ENCODE measurements at regions of chr3 and their contacts with region 1.

Region 1: GRCh38 chr3:17412950-17413530 is 329.4 kb downstream of the TBC1D5 start:
- ATAC-seq: peak in 4 of 8 experiments; percentile 23 to 81 (median 60)
- H3K4me3 ChIP-seq: no peak overlapping the region
- H3K27ac ChIP-seq: no peak overlapping the region
- H3K4me1 ChIP-seq: no peaks in the 10 kb centered on the region

Region 2: GRCh38 chr3:17258823-17259436 is 154.1 kb before region 1 on chr3:
- in situ Hi-C with region 1: loop called in 2 of 9 experiments (anchors 5 to 10 kb)
- ATAC-seq: no peak
- H3K4me3 ChIP-seq: no peak overlapping the region
- H3K27ac ChIP-seq: no peak overlapping the region
- H3K4me1 ChIP-seq: peaks cover 0 to 16% of the 10 kb centered on the region in 2 donors

Region 3: DNA sequence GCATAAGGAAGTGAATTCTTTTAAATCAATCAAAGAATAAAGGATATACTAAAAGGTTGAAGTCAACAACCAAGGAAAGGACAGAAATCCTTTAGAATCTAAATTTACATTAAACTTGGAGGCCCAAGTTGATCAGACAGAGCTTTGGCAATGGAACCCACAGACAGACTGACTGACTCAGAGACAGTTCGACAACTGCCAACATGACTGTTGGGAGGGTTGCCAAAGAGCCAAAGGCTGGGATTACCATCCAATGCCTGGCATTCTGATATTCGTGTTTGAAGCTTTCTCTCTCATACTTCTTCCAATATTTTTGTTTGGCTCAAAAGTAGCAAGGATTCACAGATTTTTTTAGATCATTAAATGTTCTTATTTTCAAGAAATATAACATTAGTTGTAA is 122.1 kb before region 1 on chr3:
- in situ Hi-C with region 1: loop called in 1 of 9 experiments (anchors 25 kb)
- ATAC-seq: no peak
- H3K4me3 ChIP-seq: no peak overlapping the region
- H3K27ac ChIP-seq: no peak overlapping the region
- H3K4me1 ChIP-seq: no peaks in the 10 kb centered on the region

Region 4: DNA sequence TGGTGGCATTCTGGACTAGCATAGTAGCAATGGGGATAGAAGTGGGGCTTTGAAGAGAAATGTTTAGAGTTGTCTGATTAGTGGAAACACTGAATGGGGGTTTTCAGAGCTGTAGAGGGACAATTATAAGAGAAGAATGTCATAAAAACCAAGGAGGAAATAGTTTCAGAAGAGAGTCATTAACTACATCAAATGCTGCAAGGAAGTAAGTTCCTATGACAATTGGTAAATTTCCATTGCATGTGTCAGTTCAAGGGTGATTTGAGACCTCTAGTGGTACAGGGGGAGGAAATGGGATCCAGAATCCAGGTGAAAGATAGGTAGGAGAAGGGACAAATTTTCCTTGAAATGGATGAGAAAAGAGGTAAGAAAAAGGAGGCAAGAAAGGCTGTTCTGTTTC is 397.7 kb after region 1 on chr3:
- in situ Hi-C with region 1: no loop called
- ATAC-seq: no peak
- H3K4me3 ChIP-seq: no peak overlapping the region
- H3K27ac ChIP-seq: no peak overlapping the region
- H3K4me1 ChIP-seq: no peaks in the 10 kb centered on the region

Measured in motor neuron (in vitro differentiated cells).